ENCODE measurements at regions of chr3 and their contacts with region 1.

Region 1: GRCh38 chr3:69231929-69232440 is 109.6 kb upstream of the LMOD3 start:
- DNase-seq: no peak
- H3K4me3 ChIP-seq: no peak overlapping the region
- H3K27ac ChIP-seq: no peak overlapping the region
- H3K4me1 ChIP-seq: peaks cover 11% of the 10 kb centered on the region
- H3K27me3 ChIP-seq: no peaks in the 10 kb centered on the region
- CTCF ChIP-seq: no peak
- POLR2A ChIP-seq: no peak

Region 2: GRCh38 chr3:69219101-69219708 is 12.8 kb before region 1 on chr3:
- CTCF ChIA-PET with region 1: interaction called, 10 read pairs
- POLR2A ChIA-PET with region 1: interaction called, 11 read pairs
- dilution Hi-C with region 1: no loop called
- intact Hi-C with region 1: no loop called
- DNase-seq: peak; percentile 45
- H3K4me3 ChIP-seq: no peak overlapping the region
- H3K27ac ChIP-seq: no peak overlapping the region
- H3K4me1 ChIP-seq: peaks cover 17% of the 10 kb centered on the region
- H3K27me3 ChIP-seq: no peaks in the 10 kb centered on the region
- CTCF ChIP-seq: no peak
- POLR2A ChIP-seq: no peak

Region 3: GRCh38 chr3:69474186-69474585 is 242.2 kb after region 1 on chr3:
- CTCF ChIA-PET with region 1: no interaction called
- POLR2A ChIA-PET with region 1: no interaction called
- dilution Hi-C with region 1: no loop called
- intact Hi-C with region 1: no loop called
- DNase-seq: no peak
- H3K4me3 ChIP-seq: no peak overlapping the region
- H3K27ac ChIP-seq: no peak overlapping the region
- H3K4me1 ChIP-seq: no peaks in the 10 kb centered on the region
- H3K27me3 ChIP-seq: peaks cover 10 to 22% of the 10 kb centered on the region in 2 experiments
- CTCF ChIP-seq: no peak
- POLR2A ChIP-seq: no peak

Measured in endothelial cell of umbilical vein (primary cell).